Dorsolateral prefrontal cortex (tissue), 120 donors: ENCODE measurements at regions of chr1 and their contacts with region 1.

Region 1: GRCh38 chr1:243713470-243714186 is 136.4 kb downstream of the AKT3 start:
- DNase-seq: peak in 5 of 10 donors; percentile 44 to 74 (median 54)
- H3K4me3 ChIP-seq: peak overlapping the region in 58 of 59 donors; percentile 2 to 62 (median 42)
- H3K27ac ChIP-seq: peak overlapping the region; percentile 20 to 90 (median 79)
- H3K27me3 ChIP-seq: no peaks in the 10 kb centered on the region
- CTCF ChIP-seq: peak in 2 of 56 donors; percentile 3 to 11

Region 2: GRCh38 chr1:243482141-243483022 is 231.2 kb before region 1 on chr1:
- intact Hi-C with region 1: loop called (anchors 5 to 10 kb)
- DNase-seq: peak in 4 of 10 donors; percentile 50 to 81 (median 70)
- H3K4me3 ChIP-seq: peak overlapping the region; percentile 41 to 77 (median 62)
- H3K27ac ChIP-seq: peak overlapping the region in 58 of 59 donors; percentile 39 to 94 (median 81)
- H3K27me3 ChIP-seq: no peaks in the 10 kb centered on the region
- CTCF ChIP-seq: no peak

Region 3: GRCh38 chr1:243495442-243496172 is 218.0 kb before region 1 on chr1:
- intact Hi-C with region 1: loop called in 1 of 2 experiments (anchors 5 kb)
- DNase-seq: no peak
- H3K4me3 ChIP-seq: peak overlapping the region in 38 of 59 donors; percentile 2 to 53 (median 26)
- H3K27ac ChIP-seq: peak overlapping the region; percentile 6 to 97 (median 91)
- H3K27me3 ChIP-seq: no peaks in the 10 kb centered on the region
- CTCF ChIP-seq: no peak

Region 4: DNA sequence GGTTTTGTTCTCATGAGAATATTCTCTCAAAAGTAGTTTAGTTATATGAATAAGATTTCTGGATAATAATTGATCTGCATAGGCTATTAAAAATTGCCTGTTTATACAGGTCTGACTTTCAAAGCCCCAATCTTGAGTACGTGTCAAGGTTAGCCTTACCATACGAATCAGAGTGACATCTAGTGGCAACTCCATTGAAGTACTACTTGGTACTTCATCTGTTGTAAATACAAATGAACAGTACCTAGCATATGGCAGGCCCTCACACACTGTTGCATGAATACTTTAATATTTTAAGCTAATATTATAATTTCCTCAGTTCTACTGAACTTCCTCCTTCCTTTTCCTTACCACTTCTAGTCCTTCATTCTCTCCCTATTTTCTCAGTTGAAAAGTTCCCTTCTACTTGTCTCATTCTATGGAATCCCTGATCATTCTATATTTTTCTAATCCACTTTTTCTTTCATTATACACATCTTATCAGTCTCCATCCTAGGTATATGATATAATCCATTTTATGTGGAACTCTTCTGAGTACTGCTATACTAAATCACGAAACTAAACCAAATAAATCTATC is 35.2 kb after region 1 on chr1:
- intact Hi-C with region 1: loop called in 1 of 2 experiments (anchors 2 kb)
- DNase-seq: peak in 1 of 10 donors; percentile 46
- H3K4me3 ChIP-seq: no peak overlapping the region
- H3K27ac ChIP-seq: peak overlapping the region in 5 of 59 donors; percentile 1 to 35 (median 9)
- H3K27me3 ChIP-seq: no peaks in the 10 kb centered on the region
- CTCF ChIP-seq: peak; percentile 66 to 96 (median 86)